ENCODE measurements at regions of chr10 and their contacts with region 1.

Region 1: DNA sequence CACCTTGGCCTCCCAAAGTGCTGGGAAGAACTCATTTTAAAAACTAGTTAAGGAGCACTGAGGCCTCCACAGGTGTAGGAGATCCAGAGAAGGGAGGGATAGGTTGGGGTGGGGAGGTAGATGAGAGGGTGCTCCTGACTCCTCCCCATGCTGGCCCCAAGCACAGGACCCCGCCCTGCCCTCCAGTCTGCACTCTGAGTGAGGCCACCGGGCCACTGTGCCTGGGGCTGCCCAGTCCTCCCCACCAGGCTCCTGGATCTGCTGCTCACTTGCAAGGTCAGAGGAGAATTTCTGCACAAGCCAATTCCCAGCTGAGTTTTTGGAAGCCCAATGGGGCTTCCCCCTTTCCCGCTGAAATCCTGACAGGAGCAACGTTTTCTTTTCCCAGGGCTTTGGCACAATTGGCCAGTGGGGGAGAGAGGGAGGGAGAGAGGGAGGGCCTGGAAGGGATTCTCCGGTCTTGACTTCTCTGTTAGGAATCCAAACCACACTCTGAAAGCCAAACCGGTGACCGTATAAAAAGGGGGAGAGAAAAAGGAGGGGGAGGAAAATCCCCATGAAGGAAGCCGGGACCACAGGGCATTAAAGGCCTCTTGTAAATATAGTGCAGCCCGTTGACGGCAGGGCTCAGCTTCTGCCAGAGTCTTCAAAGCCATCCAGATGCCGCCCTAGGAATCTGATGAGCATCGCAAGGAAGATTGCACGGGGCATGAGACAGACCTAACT is 116.2 kb downstream of the SH3PXD2A start:
- DNase-seq: no peak
- ATAC-seq: peak; percentile 33
- H3K4me3 Mint-ChIP-seq: no peak overlapping the region
- H3K27ac Mint-ChIP-seq: no peak overlapping the region
- H3K4me1 Mint-ChIP-seq: peaks cover 19% of the 10 kb centered on the region
- H3K27me3 Mint-ChIP-seq: no peaks in the 10 kb centered on the region
- CTCF ChIP-seq: no peak

Region 2: GRCh38 chr10:103759100-103759781 is 20.0 kb after region 1 on chr10:
- CTCF ChIA-PET with region 1: interaction called, 10 read pairs
- POLR2A ChIA-PET with region 1: interaction called, 3 read pairs
- DNase-seq: no peak
- ATAC-seq: no peak
- H3K4me3 Mint-ChIP-seq: no peak overlapping the region
- H3K27ac Mint-ChIP-seq: peak overlapping the region; percentile 21; the same call in 1 of the 2 replicates
- H3K4me1 Mint-ChIP-seq: peaks cover 50% of the 10 kb centered on the region
- H3K27me3 Mint-ChIP-seq: no peaks in the 10 kb centered on the region; the same call in 1 of the 2 replicates
- CTCF ChIP-seq: no peak

Region 3: GRCh38 chr10:103800789-103801540 is 61.8 kb after region 1 on chr10:
- CTCF ChIA-PET with region 1: no interaction called
- POLR2A ChIA-PET with region 1: no interaction called
- DNase-seq: no peak
- ATAC-seq: no peak
- H3K4me3 Mint-ChIP-seq: no peak overlapping the region
- H3K27ac Mint-ChIP-seq: no peak overlapping the region
- H3K4me1 Mint-ChIP-seq: peaks cover 32% of the 10 kb centered on the region
- H3K27me3 Mint-ChIP-seq: no peaks in the 10 kb centered on the region; the same call in 1 of the 2 replicates
- CTCF ChIP-seq: no peak